Posterior vena cava (tissue), 2 donors: ENCODE measurements at regions of chr6 and their contacts with region 1.

Region 1: GRCh38 chr6:86686493-86686892 is 250.8 kb upstream of the HTR1E start:
- DNase-seq: no peak

Region 2: DNA sequence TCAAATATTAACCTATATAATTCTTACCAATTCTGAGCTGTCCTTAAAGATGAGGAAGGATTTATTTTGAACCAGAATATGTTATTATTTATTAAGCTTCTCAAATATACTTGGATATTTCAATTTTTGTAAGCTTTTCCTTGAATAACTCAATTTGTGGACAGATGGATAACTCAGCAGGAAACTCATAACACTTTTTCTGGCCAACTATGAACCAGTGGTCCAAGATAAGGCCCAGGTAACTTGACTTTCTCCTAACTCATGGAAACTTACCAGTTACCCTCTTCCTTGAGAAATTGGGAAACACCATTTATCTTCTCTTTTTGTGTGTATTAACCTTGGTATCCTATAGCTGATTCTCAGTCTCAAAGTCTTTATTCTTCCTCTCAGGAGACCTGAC is 616.3 kb before region 1 on chr6:
- intact Hi-C with region 1: loop called in 1 of 2 experiments (anchors 10 kb)
- DNase-seq: no peak